WTC11 (cell line): ENCODE measurements at regions of chr17 and their contacts with region 1.

Region 1: GRCh38 chr17:76671123-76671911 is 27.8 kb upstream of the ST6GALNAC1 start:
- DNase-seq: peak; percentile 100
- ATAC-seq: peak; percentile 97
- H3K4me3 Mint-ChIP-seq: peak overlapping the region; percentile 89
- H3K27ac Mint-ChIP-seq: peak overlapping the region; percentile 98
- H3K4me1 Mint-ChIP-seq: peaks cover 24% of the 10 kb centered on the region
- H3K27me3 Mint-ChIP-seq: no peaks in the 10 kb centered on the region
- CTCF ChIP-seq: no peak

Region 2: DNA sequence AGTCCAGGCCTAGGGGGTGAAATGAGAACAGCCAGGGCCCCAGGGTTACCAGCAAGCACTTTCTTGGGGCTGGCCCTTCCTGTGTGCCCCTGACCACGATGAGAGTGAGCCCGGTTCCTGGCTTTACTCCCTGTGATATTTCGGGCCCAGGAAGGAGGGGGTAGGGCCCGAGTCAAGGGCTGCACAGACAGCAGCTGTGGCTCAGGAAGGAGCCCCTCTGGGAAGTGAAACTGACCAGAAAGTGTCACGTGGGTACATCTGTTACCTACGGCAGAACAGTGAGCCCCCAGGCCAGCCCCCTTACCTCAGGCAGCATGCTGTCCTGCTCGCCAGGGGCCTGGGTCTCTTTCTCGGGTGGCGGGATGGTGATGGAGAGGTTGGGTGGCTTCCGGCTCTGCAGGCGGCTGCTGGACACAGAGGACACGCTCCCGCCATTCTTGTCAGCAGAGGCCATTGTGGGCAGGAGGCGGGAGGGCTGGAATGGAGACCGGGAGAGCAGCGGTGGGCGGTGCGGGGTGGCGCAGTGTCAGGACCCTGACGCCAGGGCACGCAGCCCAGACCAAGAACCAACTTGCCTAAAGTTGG is 190.2 kb before region 1 on chr17:
- CTCF ChIA-PET with region 1: no interaction called
- POLR2A ChIA-PET with region 1: no interaction called
- DNase-seq: no peak
- ATAC-seq: no peak
- H3K4me3 Mint-ChIP-seq: no peak overlapping the region
- H3K27ac Mint-ChIP-seq: no peak overlapping the region
- H3K4me1 Mint-ChIP-seq: no peaks in the 10 kb centered on the region
- H3K27me3 Mint-ChIP-seq: no peaks in the 10 kb centered on the region
- CTCF ChIP-seq: no peak

Region 3: DNA sequence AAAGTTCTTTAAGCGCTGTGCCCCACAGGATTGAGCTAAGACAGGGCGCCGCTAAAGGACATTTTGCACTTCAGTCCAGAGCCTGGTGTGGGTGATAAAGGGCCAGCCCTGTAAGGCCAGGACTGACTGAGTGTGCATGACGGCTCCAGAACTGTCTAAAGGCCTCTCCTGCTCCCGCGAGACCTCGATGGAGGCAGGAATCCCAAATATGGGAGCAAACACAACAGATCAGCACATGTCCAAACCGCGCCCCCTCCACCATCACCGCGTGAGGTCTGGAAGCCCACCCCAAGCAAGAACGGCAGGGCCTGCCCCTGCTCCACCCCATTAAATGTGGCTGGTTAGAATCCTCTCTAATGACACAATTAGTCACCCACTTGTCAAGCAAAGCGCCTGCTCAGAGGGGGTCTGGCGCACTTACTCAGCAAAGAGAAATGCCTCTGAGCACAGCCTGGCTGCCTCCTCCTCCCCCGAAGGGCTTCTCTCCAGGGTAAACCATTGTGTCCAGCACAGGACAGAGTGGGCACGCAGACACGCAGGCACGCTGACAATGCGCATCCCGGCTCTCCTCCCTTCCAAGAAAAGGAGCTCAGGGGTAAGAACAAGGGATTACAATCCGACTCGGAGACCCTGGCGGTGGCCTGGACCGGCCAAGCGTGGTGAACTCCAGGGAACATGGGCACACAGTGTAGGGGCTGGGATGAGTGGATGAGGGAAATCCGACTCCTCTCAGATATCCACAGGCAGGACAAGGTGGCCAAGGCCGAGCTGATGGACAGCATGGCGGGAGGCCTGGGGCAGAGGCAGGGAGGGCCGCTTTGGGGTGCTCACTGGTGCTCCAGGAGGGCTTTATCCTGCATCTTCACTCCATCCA is 38.0 kb after region 1 on chr17:
- CTCF ChIA-PET with region 1: interaction called, 11 read pairs
- POLR2A ChIA-PET with region 1: interaction called, 5 read pairs
- DNase-seq: no peak
- ATAC-seq: no peak
- H3K4me3 Mint-ChIP-seq: peak overlapping the region; percentile 74
- H3K27ac Mint-ChIP-seq: no peak overlapping the region
- H3K4me1 Mint-ChIP-seq: peaks cover 34% of the 10 kb centered on the region
- H3K27me3 Mint-ChIP-seq: peaks cover 15% of the 10 kb centered on the region
- CTCF ChIP-seq: no peak

Region 4: GRCh38 chr17:76753061-76753961 is 82.0 kb after region 1 on chr17:
- CTCF ChIA-PET with region 1: no interaction called
- POLR2A ChIA-PET with region 1: no interaction called
- DNase-seq: no peak
- ATAC-seq: no peak
- H3K4me3 Mint-ChIP-seq: no peak overlapping the region
- H3K27ac Mint-ChIP-seq: no peak overlapping the region
- H3K4me1 Mint-ChIP-seq: no peaks in the 10 kb centered on the region
- H3K27me3 Mint-ChIP-seq: no peaks in the 10 kb centered on the region
- CTCF ChIP-seq: no peak